Activated CD4-positive, alpha-beta T cell treated with anti-CD3 and anti-CD28 coated beads for 36 hours (primary cell): ENCODE measurements at regions of chr3 and their contacts with region 1.

Region 1: DNA sequence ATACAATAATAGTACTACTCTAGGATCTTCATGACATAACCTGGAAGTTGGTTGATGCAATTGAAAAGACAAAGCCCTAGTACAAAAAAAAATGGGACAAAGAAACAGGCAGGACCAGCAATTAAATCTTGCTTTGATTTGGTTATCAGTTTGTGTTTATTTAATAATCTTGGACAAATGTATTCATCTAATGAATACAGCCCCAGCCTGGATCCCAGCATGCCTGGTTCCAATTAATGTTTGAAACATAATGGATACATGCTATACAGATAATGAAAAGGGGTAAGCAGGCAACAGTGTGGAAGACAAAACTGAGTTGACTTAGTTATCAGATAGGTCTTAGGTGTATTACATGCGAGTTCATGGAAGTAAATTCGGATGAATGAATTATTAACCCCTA is 29.6 kb upstream of the SATB1 start:
- DNase-seq: no peak
- ATAC-seq: no peak
- H3K4me3 Mint-ChIP-seq: no peak overlapping the region
- H3K27ac Mint-ChIP-seq: no peak overlapping the region
- H3K4me1 Mint-ChIP-seq: peaks cover 61% of the 10 kb centered on the region
- H3K27me3 Mint-ChIP-seq: no peaks in the 10 kb centered on the region

Region 2: DNA sequence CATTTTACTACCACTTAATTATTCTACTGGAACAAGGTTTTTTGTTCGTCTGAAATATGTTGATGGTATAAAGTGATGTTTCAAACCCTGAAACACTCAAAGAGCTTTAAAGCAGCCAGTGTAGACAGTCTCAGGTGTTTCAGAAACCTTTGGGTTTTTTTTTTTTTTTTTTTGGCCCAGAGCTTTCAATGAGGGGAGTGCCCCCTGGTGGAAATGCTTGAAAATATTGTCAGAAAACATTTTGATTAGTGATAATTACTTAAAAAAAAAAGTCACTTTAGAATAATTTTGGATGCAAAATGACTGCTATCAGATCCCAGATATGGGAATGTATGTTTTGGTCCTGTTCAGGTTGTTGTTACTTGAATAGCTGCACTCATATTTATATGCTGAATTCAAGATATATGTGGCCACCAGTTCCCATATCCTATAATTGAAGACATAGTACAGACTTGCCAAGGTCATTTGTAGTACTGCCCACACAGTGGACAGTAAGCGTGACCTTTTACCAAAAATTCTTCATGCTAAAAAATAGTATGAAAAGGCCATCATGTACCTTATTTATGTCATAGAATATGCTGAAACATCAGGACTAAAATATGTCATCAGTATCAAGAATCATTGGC is 65.5 kb before region 1 on chr3:
- CTCF ChIA-PET with region 1: no interaction called
- POLR2A ChIA-PET with region 1: no interaction called
- intact Hi-C with region 1: no loop called
- DNase-seq: peak; percentile 31
- ATAC-seq: no peak
- H3K4me3 Mint-ChIP-seq: no peak overlapping the region
- H3K27ac Mint-ChIP-seq: peak overlapping the region; percentile 83
- H3K4me1 Mint-ChIP-seq: peaks cover 75% of the 10 kb centered on the region
- H3K27me3 Mint-ChIP-seq: no peaks in the 10 kb centered on the region

Region 3: GRCh38 chr3:18411541-18411940 is 43.2 kb before region 1 on chr3:
- CTCF ChIA-PET with region 1: no interaction called
- POLR2A ChIA-PET with region 1: interaction called, 10 read pairs
- intact Hi-C with region 1: no loop called
- DNase-seq: no peak
- ATAC-seq: no peak
- H3K4me3 Mint-ChIP-seq: peak overlapping the region; percentile 57
- H3K27ac Mint-ChIP-seq: peak overlapping the region; percentile 90
- H3K4me1 Mint-ChIP-seq: peaks cover 91% of the 10 kb centered on the region
- H3K27me3 Mint-ChIP-seq: no peaks in the 10 kb centered on the region

Region 4: DNA sequence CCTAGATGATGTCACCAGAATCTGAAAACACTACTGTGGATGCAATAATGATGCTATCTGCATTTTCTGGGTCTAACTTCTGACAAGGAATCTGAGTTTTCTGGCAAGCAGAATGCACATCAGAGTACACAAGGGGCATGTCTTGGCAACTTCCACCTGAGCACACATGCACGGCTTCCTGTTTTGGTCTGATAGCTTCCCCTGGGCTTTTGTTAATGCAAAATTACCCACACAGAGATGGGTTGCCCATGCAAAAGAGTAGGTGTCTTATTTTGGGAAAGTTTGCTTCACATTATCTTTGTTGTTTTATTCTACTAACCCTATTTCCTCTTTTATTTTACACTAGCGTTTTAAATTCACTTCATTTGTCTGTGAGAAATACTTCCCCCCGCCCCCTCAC is 44.5 kb after region 1 on chr3:
- CTCF ChIA-PET with region 1: no interaction called
- POLR2A ChIA-PET with region 1: no interaction called
- intact Hi-C with region 1: loop called in 1 of 2 experiments (anchors 5 kb)
- DNase-seq: peak; percentile 15
- ATAC-seq: peak; percentile 51
- H3K4me3 Mint-ChIP-seq: peak overlapping the region; percentile 24
- H3K27ac Mint-ChIP-seq: peak overlapping the region; percentile 69
- H3K4me1 Mint-ChIP-seq: peaks cover 46% of the 10 kb centered on the region
- H3K27me3 Mint-ChIP-seq: no peaks in the 10 kb centered on the region

Region 5: GRCh38 chr3:19822805-19823204 is 1368.0 kb after region 1 on chr3:
- CTCF ChIA-PET with region 1: no interaction called
- POLR2A ChIA-PET with region 1: no interaction called
- intact Hi-C with region 1: no loop called
- DNase-seq: no peak
- ATAC-seq: no peak
- H3K4me3 Mint-ChIP-seq: no peak overlapping the region
- H3K27ac Mint-ChIP-seq: no peak overlapping the region
- H3K4me1 Mint-ChIP-seq: no peaks in the 10 kb centered on the region
- H3K27me3 Mint-ChIP-seq: no peaks in the 10 kb centered on the region